ENCODE measurements at regions of chr22 and their contacts with region 1.

Region 1: DNA sequence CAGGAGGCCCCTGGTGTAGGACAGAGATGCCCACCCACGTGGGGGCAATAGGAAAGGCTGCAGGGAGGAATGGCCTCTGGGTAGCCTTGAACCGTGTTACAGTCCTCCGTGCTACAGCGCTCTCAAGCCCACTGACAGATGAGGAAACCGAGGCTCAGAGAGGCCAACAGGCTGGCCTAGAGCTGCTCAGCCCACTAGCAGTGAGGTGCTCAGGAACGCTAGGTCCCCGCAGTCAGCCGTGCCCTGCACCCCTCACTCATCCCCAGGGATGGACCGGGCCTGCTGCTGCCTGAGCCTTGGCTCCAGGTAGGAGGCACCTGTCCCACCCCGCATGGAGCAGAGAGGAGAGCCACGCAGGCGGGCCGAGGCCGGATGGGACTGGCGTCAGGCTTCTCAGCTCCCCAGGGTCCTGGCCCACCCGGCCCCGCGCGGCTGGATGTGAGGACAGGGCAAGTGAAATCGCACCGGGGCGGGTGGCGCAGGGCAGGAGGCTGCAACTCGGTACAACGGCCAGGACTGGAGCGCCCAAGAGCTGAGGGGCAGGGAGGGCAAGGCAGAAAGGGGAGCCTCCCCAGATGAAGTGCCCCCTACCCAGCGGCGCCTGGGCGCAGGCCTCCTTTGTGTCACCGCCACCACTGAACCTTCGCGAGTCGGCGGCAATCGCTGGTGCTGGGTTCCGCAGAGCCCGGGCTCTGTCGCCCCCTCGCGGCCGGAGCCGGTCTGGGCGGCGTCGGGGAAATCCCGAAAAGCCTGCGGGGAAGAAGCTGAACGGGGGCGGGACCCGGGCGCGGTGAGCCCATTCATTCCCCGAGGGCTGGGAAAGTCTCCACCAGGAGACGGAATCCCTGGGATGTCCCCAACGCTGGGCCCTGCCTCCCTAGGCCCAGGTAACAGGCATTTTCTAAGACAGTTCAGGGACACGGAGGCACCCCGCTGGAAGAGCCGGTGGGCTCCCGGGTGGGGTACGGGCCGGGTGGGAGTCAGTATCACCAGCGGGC is 8.4 kb upstream of the SLC2A11 start:
- DNase-seq: peak; percentile 87
- ATAC-seq: peak; percentile 92
- H3K4me3 Mint-ChIP-seq: no peak overlapping the region
- H3K27ac Mint-ChIP-seq: no peak overlapping the region
- H3K4me1 Mint-ChIP-seq: peaks cover 7% of the 10 kb centered on the region
- H3K27me3 Mint-ChIP-seq: peaks cover 2% of the 10 kb centered on the region
- CTCF ChIP-seq: peak; percentile 97

Region 2: DNA sequence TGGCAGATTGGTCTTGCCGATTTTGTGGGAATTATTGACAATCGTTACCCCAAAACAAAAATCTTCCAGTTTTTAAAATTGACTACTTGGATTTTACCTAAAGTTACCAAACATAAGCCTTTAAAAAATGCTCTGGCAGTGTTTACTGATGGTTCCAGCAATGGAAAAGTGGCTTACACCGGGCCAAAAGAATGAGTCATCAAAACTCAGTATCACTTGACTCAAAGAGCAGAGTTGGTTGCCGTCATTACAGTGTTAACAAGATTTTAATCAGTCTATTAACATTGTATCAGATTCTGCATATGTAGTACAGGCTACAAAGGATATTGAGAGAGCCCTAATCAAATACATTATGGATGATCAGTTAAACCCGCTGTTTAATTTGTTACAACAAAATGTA is 306.4 kb before region 1 on chr22:
- CTCF ChIA-PET with region 1: interaction called, 4 read pairs
- POLR2A ChIA-PET with region 1: no interaction called
- intact Hi-C with region 1: loop called (anchors 5 kb)
- DNase-seq: no peak
- ATAC-seq: no peak
- H3K4me3 Mint-ChIP-seq: no peak overlapping the region
- H3K27ac Mint-ChIP-seq: no peak overlapping the region
- H3K4me1 Mint-ChIP-seq: peaks cover 9% of the 10 kb centered on the region
- H3K27me3 Mint-ChIP-seq: peaks cover 2% of the 10 kb centered on the region
- CTCF ChIP-seq: no peak

Region 3: GRCh38 chr22:23696326-23696851 is 152.9 kb before region 1 on chr22:
- CTCF ChIA-PET with region 1: interaction called, 11 read pairs
- POLR2A ChIA-PET with region 1: no interaction called
- intact Hi-C with region 1: no loop called
- DNase-seq: peak; percentile 93
- ATAC-seq: peak; percentile 99
- H3K4me3 Mint-ChIP-seq: peak overlapping the region; percentile 80
- H3K27ac Mint-ChIP-seq: peak overlapping the region; percentile 100
- H3K4me1 Mint-ChIP-seq: peaks cover 48% of the 10 kb centered on the region
- H3K27me3 Mint-ChIP-seq: no peaks in the 10 kb centered on the region
- CTCF ChIP-seq: no peak

Region 4: GRCh38 chr22:23709107-23709506 is 140.2 kb before region 1 on chr22:
- CTCF ChIA-PET with region 1: no interaction called
- POLR2A ChIA-PET with region 1: no interaction called
- intact Hi-C with region 1: no loop called
- DNase-seq: no peak
- ATAC-seq: no peak
- H3K4me3 Mint-ChIP-seq: no peak overlapping the region
- H3K27ac Mint-ChIP-seq: peak overlapping the region; percentile 19
- H3K4me1 Mint-ChIP-seq: peaks cover 64% of the 10 kb centered on the region
- H3K27me3 Mint-ChIP-seq: no peaks in the 10 kb centered on the region
- CTCF ChIP-seq: no peak

Region 5: GRCh38 chr22:23774743-23775566 is 74.4 kb before region 1 on chr22:
- CTCF ChIA-PET with region 1: interaction called, 48 read pairs
- POLR2A ChIA-PET with region 1: no interaction called
- intact Hi-C with region 1: no loop called
- DNase-seq: no peak
- ATAC-seq: no peak
- H3K4me3 Mint-ChIP-seq: no peak overlapping the region
- H3K27ac Mint-ChIP-seq: no peak overlapping the region
- H3K4me1 Mint-ChIP-seq: peaks cover 11% of the 10 kb centered on the region
- H3K27me3 Mint-ChIP-seq: no peaks in the 10 kb centered on the region
- CTCF ChIP-seq: no peak

Region 6: GRCh38 chr22:23868580-23868979 is 19.3 kb after region 1 on chr22:
- CTCF ChIA-PET with region 1: interaction called, 13 read pairs
- POLR2A ChIA-PET with region 1: interaction called, 3 read pairs
- intact Hi-C with region 1: no loop called
- DNase-seq: no peak
- ATAC-seq: no peak
- H3K4me3 Mint-ChIP-seq: no peak overlapping the region
- H3K27ac Mint-ChIP-seq: no peak overlapping the region
- H3K4me1 Mint-ChIP-seq: no peaks in the 10 kb centered on the region
- H3K27me3 Mint-ChIP-seq: no peaks in the 10 kb centered on the region
- CTCF ChIP-seq: no peak

Region 7: DNA sequence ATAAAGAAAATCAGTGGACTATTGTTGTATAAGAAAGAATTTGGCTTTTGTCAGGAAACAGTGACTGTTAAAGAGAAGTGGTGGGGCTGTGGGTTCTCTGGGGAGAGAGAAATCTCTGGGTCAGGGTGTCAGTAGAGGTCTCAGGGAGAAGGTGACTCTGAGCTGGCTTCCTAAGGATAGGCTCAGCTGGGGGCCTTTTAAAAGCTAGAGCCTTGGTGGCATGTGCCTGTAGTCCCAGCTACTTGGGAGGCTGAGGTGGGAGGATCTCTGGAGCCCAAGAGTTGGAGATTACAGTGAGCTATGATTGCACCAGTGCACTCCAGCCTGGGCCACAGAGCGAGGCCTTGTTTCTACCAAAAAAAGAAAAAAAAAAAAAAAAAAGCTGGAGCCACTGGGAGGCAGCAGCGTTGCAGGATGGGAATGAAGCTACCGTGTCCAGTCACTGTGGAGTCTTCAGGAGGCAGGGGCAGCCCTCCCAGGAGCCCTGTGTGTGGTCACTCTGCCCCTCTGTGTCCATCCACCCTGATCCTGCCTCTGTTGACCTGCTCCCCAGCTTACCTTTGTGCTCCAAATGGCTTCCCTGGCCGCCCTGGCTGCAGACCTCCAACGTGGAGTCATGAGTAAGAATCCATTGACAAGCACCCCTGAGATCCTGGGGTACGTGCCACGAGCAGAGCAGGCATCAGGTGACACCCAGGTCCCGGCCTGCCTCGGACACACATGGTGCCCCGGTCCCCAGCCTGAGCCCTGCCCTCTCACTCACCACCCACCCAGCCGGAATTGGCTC is 39.5 kb after region 1 on chr22:
- CTCF ChIA-PET with region 1: interaction called, 15 read pairs
- POLR2A ChIA-PET with region 1: interaction called, 7 read pairs
- intact Hi-C with region 1: no loop called
- DNase-seq: no peak
- ATAC-seq: no peak
- H3K4me3 Mint-ChIP-seq: no peak overlapping the region
- H3K27ac Mint-ChIP-seq: no peak overlapping the region
- H3K4me1 Mint-ChIP-seq: peaks cover 4% of the 10 kb centered on the region
- H3K27me3 Mint-ChIP-seq: no peaks in the 10 kb centered on the region
- CTCF ChIP-seq: no peak

Region 8: GRCh38 chr22:24290459-24290858 is 441.2 kb after region 1 on chr22:
- CTCF ChIA-PET with region 1: no interaction called
- POLR2A ChIA-PET with region 1: no interaction called
- intact Hi-C with region 1: no loop called
- DNase-seq: no peak
- ATAC-seq: no peak
- H3K4me3 Mint-ChIP-seq: no peak overlapping the region
- H3K27ac Mint-ChIP-seq: no peak overlapping the region
- H3K4me1 Mint-ChIP-seq: peaks cover 41% of the 10 kb centered on the region
- H3K27me3 Mint-ChIP-seq: no peaks in the 10 kb centered on the region
- CTCF ChIP-seq: no peak